Endothelial cell of umbilical vein (primary cell): ENCODE measurements at regions of chr5 and their contacts with region 1.

Region 1: DNA sequence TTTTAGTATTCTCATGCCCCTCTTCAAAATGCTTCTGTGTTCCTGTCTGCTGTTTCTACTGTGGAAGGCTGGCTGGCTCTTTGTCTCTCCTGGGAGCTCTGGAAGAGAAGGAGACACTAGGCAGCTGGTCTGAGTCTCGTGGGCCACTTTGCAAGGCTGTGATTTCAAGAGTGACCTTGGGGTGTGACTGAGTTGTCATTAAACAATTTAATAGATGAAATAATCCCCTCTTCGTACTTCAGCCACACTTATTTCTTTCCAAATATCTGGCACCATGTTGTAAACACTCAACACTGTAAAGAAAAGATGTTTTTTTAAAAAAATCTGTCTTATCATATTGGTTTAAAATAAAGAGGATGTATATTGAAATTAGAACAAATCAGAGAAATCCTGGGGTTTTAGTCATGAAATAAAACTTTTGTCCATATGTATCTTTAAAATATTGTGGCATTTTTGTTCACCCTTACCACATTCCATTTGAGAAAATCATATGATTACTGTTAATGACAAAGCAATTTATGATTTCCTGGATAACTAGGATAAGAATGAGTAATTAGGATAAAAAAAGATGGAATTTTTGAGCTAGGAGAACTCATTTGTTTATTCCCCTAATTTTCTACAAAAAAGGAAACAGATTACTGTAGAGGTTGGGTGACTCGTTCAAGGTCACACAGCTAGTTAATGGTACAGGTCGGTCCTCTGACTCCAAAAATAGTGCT is 200.8 kb downstream of the MAT2B start:
- DNase-seq: peak; percentile 83
- H3K4me3 ChIP-seq: no peak overlapping the region
- H3K27ac ChIP-seq: peak overlapping the region; percentile 96
- H3K4me1 ChIP-seq: peaks cover 34% of the 10 kb centered on the region
- H3K27me3 ChIP-seq: no peaks in the 10 kb centered on the region
- CTCF ChIP-seq: no peak
- POLR2A ChIP-seq: no peak

Region 2: GRCh38 chr5:163162645-163163044 is 543.6 kb before region 1 on chr5:
- CTCF ChIA-PET with region 1: no interaction called
- POLR2A ChIA-PET with region 1: no interaction called
- dilution Hi-C with region 1: no loop called
- intact Hi-C with region 1: no loop called
- DNase-seq: no peak
- H3K4me3 ChIP-seq: no peak overlapping the region
- H3K27ac ChIP-seq: no peak overlapping the region
- H3K4me1 ChIP-seq: no peaks in the 10 kb centered on the region
- H3K27me3 ChIP-seq: no peaks in the 10 kb centered on the region
- CTCF ChIP-seq: no peak
- POLR2A ChIP-seq: no peak

Region 3: GRCh38 chr5:163459922-163460766 is 246.1 kb before region 1 on chr5 and contains the starts of genes HMMR and NUDCD2:
- CTCF ChIA-PET with region 1: no interaction called
- POLR2A ChIA-PET with region 1: no interaction called
- dilution Hi-C with region 1: no loop called
- intact Hi-C with region 1: loop called (anchors 5 kb)
- DNase-seq: peak; percentile 99
- H3K4me3 ChIP-seq: peak within 1 kb of the TSS; percentile 85 to 96 (median 92)
- H3K27ac ChIP-seq: peak within 1 kb of the TSS; percentile 99
- H3K4me1 ChIP-seq: peaks cover 21% of the 10 kb centered on the region
- H3K27me3 ChIP-seq: no peaks in the 10 kb centered on the region
- CTCF ChIP-seq: peak in 1 of 2 donors; percentile 11
- POLR2A ChIP-seq: peak; percentile 95
- total RNA-seq, gene HMMR: 26.0 and 31.0 TPM in 2 replicates
- total RNA-seq, gene NUDCD2: 46.9 and 50.3 TPM in 2 replicates

Region 4: GRCh38 chr5:163861670-163862069 is 155.5 kb after region 1 on chr5:
- CTCF ChIA-PET with region 1: no interaction called
- POLR2A ChIA-PET with region 1: interaction called, 4 read pairs
- dilution Hi-C with region 1: loop called (anchors 10 kb)
- intact Hi-C with region 1: loop called (anchors 1 kb)
- DNase-seq: peak; percentile 91
- H3K4me3 ChIP-seq: no peak overlapping the region
- H3K27ac ChIP-seq: peak overlapping the region; percentile 84
- H3K4me1 ChIP-seq: peaks cover 41% of the 10 kb centered on the region
- H3K27me3 ChIP-seq: no peaks in the 10 kb centered on the region
- CTCF ChIP-seq: no peak
- POLR2A ChIP-seq: no peak

Region 5: GRCh38 chr5:163867324-163867723 is 161.1 kb after region 1 on chr5:
- CTCF ChIA-PET with region 1: interaction called, 3 read pairs
- POLR2A ChIA-PET with region 1: no interaction called
- dilution Hi-C with region 1: loop called (anchors 10 kb)
- intact Hi-C with region 1: loop called (anchors 1 kb)
- DNase-seq: peak; percentile 76
- H3K4me3 ChIP-seq: no peak overlapping the region
- H3K27ac ChIP-seq: peak overlapping the region; percentile 99
- H3K4me1 ChIP-seq: peaks cover 55% of the 10 kb centered on the region
- H3K27me3 ChIP-seq: no peaks in the 10 kb centered on the region
- CTCF ChIP-seq: no peak
- POLR2A ChIP-seq: peak; percentile 26

Region 6: GRCh38 chr5:163968651-163969050 is 262.4 kb after region 1 on chr5:
- CTCF ChIA-PET with region 1: no interaction called
- POLR2A ChIA-PET with region 1: no interaction called
- dilution Hi-C with region 1: no loop called
- intact Hi-C with region 1: loop called (anchors 1 kb)
- DNase-seq: peak; percentile 14
- H3K4me3 ChIP-seq: no peak overlapping the region
- H3K27ac ChIP-seq: peak overlapping the region; percentile 35
- H3K4me1 ChIP-seq: peaks cover 8% of the 10 kb centered on the region
- H3K27me3 ChIP-seq: no peaks in the 10 kb centered on the region
- CTCF ChIP-seq: no peak
- POLR2A ChIP-seq: no peak

Region 7: GRCh38 chr5:163976691-163977090 is 270.5 kb after region 1 on chr5:
- CTCF ChIA-PET with region 1: no interaction called
- POLR2A ChIA-PET with region 1: no interaction called
- dilution Hi-C with region 1: no loop called
- intact Hi-C with region 1: loop called (anchors 1 kb)
- DNase-seq: peak; percentile 40
- H3K4me3 ChIP-seq: no peak overlapping the region
- H3K27ac ChIP-seq: peak overlapping the region; percentile 28
- H3K4me1 ChIP-seq: peaks cover 3% of the 10 kb centered on the region
- H3K27me3 ChIP-seq: no peaks in the 10 kb centered on the region
- CTCF ChIP-seq: no peak
- POLR2A ChIP-seq: no peak